SK-N-SH (cell line): ENCODE measurements at regions of chr3 and their contacts with region 1.

Region 1: GRCh38 chr3:141231101-141231935 is at the start of gene PXYLP1:
- DNase-seq: peak; percentile 96
- H3K4me3 ChIP-seq: peak within 1 kb of the TSS; percentile 74 to 79
- H3K27ac ChIP-seq: peak within 1 kb of the TSS in 1 of 2 experiments; percentile 84; a peak in 2 of 4 replicates
- H3K4me1 ChIP-seq: peaks cover 5 to 57% of the 10 kb centered on the region in 2 experiments; a peak in 3 of 4 replicates
- H3K27me3 ChIP-seq: no peaks in the 10 kb centered on the region
- CTCF ChIP-seq: peak; percentile 58
- EP300 ChIP-seq: no peak
- RAD21 ChIP-seq: peak; percentile 57
- polyA plus RNA-seq, gene PXYLP1: 8.6 and 12.1 TPM in 2 replicates

Region 2: DNA sequence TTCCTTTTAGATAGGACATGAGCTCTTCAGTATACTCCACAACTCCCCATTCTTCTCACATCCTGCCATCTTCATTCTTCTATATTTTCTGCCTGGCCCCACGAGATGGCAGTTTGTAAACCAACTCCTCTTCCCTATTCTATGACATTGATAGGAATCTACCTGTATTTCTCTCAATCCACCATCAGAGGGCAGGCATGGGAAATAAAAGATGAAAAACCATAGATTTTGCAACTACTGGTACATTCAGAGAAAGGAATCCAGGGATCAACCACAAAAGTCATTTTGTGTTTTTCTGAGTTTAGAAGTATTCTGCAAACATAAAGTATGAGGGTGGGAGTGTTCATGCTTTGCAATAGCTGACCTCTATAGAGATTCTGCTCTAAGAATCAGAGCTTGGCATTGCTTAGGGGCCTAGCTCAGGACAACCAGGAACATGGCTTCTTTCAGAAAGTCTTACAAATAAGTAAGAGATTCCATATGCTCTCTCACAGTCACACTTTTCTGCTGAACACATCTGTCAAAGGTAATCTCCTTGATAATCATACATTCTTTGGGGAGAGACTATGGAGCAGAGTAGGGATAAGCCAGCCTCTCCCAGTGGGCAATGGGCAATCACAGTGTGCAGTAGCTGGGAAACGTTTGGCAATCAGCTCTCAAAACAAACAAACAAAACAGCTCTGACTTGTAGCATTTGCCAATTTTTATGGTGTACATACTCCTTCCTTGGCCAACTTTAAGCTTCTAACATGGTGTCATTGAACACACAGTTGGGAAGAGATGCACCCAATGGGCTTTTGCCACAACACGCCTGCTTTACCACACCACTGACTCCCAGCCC is 332.8 kb before region 1 on chr3:
- CTCF ChIA-PET with region 1: no interaction called
- POLR2A ChIA-PET with region 1: no interaction called
- DNase-seq: peak; percentile 35
- H3K4me3 ChIP-seq: no peak overlapping the region
- H3K27ac ChIP-seq: no peak overlapping the region
- H3K4me1 ChIP-seq: no peaks in the 10 kb centered on the region
- H3K27me3 ChIP-seq: no peaks in the 10 kb centered on the region
- CTCF ChIP-seq: peak; percentile 67
- EP300 ChIP-seq: no peak
- RAD21 ChIP-seq: peak; percentile 69

Region 3: GRCh38 chr3:140931016-140931454 is 300.3 kb before region 1 on chr3:
- CTCF ChIA-PET with region 1: no interaction called
- POLR2A ChIA-PET with region 1: no interaction called
- DNase-seq: no peak
- H3K4me3 ChIP-seq: no peak overlapping the region
- H3K27ac ChIP-seq: no peak overlapping the region
- H3K4me1 ChIP-seq: no peaks in the 10 kb centered on the region
- H3K27me3 ChIP-seq: no peaks in the 10 kb centered on the region
- CTCF ChIP-seq: no peak
- EP300 ChIP-seq: no peak
- RAD21 ChIP-seq: no peak

Region 4: GRCh38 chr3:141174674-141175073 is 56.6 kb before region 1 on chr3:
- CTCF ChIA-PET with region 1: no interaction called
- POLR2A ChIA-PET with region 1: no interaction called
- DNase-seq: no peak
- H3K4me3 ChIP-seq: no peak overlapping the region
- H3K27ac ChIP-seq: no peak overlapping the region
- H3K4me1 ChIP-seq: no peaks in the 10 kb centered on the region
- H3K27me3 ChIP-seq: no peaks in the 10 kb centered on the region
- CTCF ChIP-seq: no peak
- EP300 ChIP-seq: no peak
- RAD21 ChIP-seq: no peak

Region 5: DNA sequence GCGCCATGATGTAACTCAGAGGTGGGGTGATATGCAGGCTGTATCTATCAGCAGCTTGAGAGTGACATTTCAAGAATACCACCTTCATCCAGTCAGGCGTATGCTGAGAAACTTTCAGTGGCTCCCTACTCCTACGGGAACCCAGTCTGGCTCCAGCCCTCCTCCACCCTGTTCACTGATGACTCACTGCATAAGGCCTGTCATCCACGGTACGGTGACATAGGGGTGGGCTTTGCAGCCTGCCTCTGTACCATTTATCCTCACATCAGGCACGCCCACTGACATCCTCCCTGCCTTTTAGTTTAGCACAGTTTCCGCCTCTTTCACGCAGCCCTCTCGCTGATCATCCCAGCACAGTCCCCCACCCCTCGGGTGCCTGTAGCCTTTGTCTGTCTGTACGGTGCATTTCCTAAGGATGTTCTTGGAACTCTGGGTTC is 12.0 kb after region 1 on chr3:
- CTCF ChIA-PET with region 1: interaction called, 22 read pairs
- POLR2A ChIA-PET with region 1: no interaction called
- DNase-seq: no peak
- H3K4me3 ChIP-seq: no peak overlapping the region
- H3K27ac ChIP-seq: no peak overlapping the region
- H3K4me1 ChIP-seq: peaks cover 19 to 21% of the 10 kb centered on the region in 2 experiments; a peak in 3 of 4 replicates
- H3K27me3 ChIP-seq: no peaks in the 10 kb centered on the region
- CTCF ChIP-seq: no peak
- EP300 ChIP-seq: no peak
- RAD21 ChIP-seq: no peak

Region 6: GRCh38 chr3:141255846-141256261 is 24.5 kb after region 1 on chr3:
- CTCF ChIA-PET with region 1: interaction called, 11 read pairs
- POLR2A ChIA-PET with region 1: no interaction called
- DNase-seq: no peak
- H3K4me3 ChIP-seq: no peak overlapping the region; a peak in 1 of 4 replicates
- H3K27ac ChIP-seq: no peak overlapping the region
- H3K4me1 ChIP-seq: peaks cover 0 to 5% of the 10 kb centered on the region in 2 experiments; a peak in 1 of 4 replicates
- H3K27me3 ChIP-seq: no peaks in the 10 kb centered on the region
- CTCF ChIP-seq: peak; percentile 39
- EP300 ChIP-seq: no peak
- RAD21 ChIP-seq: peak; percentile 41

Region 7: GRCh38 chr3:141273700-141274402 is 42.5 kb after region 1 on chr3:
- CTCF ChIA-PET with region 1: interaction called, 59 read pairs
- POLR2A ChIA-PET with region 1: interaction called, 7 read pairs
- DNase-seq: no peak
- H3K4me3 ChIP-seq: no peak overlapping the region
- H3K27ac ChIP-seq: no peak overlapping the region
- H3K4me1 ChIP-seq: peaks cover 7 to 9% of the 10 kb centered on the region in 2 experiments; a peak in 2 of 4 replicates
- H3K27me3 ChIP-seq: no peaks in the 10 kb centered on the region
- CTCF ChIP-seq: no peak
- EP300 ChIP-seq: no peak
- RAD21 ChIP-seq: no peak

Region 8: GRCh38 chr3:141279077-141279967 is 48.0 kb after region 1 on chr3:
- CTCF ChIA-PET with region 1: interaction called, 59 read pairs
- POLR2A ChIA-PET with region 1: interaction called, 7 read pairs
- DNase-seq: peak; percentile 62
- H3K4me3 ChIP-seq: no peak overlapping the region; a peak in 1 of 4 replicates
- H3K27ac ChIP-seq: peak overlapping the region; percentile 11 to 35; a peak in 1 of 4 replicates
- H3K4me1 ChIP-seq: peaks cover 0 to 20% of the 10 kb centered on the region in 2 experiments; a peak in 2 of 4 replicates
- H3K27me3 ChIP-seq: no peaks in the 10 kb centered on the region
- CTCF ChIP-seq: peak; percentile 65
- EP300 ChIP-seq: no peak
- RAD21 ChIP-seq: peak; percentile 73

Region 9: GRCh38 chr3:141303481-141304223 is 72.3 kb after region 1 on chr3:
- CTCF ChIA-PET with region 1: interaction called, 13 read pairs
- POLR2A ChIA-PET with region 1: interaction called, 3 read pairs
- DNase-seq: peak; percentile 66
- H3K4me3 ChIP-seq: no peak overlapping the region; a peak in 1 of 4 replicates
- H3K27ac ChIP-seq: no peak overlapping the region
- H3K4me1 ChIP-seq: no peaks in the 10 kb centered on the region; a peak in 1 of 4 replicates
- H3K27me3 ChIP-seq: no peaks in the 10 kb centered on the region
- CTCF ChIP-seq: peak; percentile 89
- EP300 ChIP-seq: no peak
- RAD21 ChIP-seq: peak; percentile 75